A673 (cell line): ENCODE measurements at regions of chr7 and their contacts with region 1.

Region 1: DNA sequence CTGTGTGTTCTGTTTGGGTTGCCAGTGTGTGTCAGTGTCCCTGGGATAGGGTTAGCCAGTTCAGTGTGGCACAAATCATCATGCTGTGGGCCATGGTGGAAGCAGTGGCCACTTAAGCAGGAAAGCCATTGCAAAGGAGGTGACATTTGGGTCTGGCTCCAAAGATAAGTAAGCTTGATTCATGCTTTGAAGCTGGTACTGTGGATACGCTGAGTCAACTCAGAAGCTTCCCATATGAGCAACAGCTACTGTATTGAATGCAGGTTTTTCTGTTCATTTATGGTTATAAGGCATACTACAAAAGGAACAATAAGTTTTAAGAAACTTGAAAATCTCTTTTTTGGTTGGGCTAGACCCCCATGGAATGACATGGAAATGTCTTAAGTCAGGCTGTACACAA is 143.1 kb downstream of the BMPER start:
- DNase-seq: no peak
- H3K4me3 ChIP-seq: no peak overlapping the region
- H3K27ac ChIP-seq: peak overlapping the region; percentile 94
- H3K4me1 ChIP-seq: peaks cover 60% of the 10 kb centered on the region
- H3K27me3 ChIP-seq: no peaks in the 10 kb centered on the region
- CTCF ChIP-seq: no peak

Region 2: GRCh38 chr7:33757562-33758165 is 290.8 kb before region 1 on chr7:
- CTCF ChIA-PET with region 1: no interaction called
- POLR2A ChIA-PET with region 1: no interaction called
- intact Hi-C with region 1: loop called (anchors 5 kb)
- DNase-seq: peak; percentile 68
- H3K4me3 ChIP-seq: no peak overlapping the region
- H3K27ac ChIP-seq: no peak overlapping the region
- H3K4me1 ChIP-seq: peaks cover 32% of the 10 kb centered on the region
- H3K27me3 ChIP-seq: no peaks in the 10 kb centered on the region
- CTCF ChIP-seq: peak; percentile 69

Region 3: DNA sequence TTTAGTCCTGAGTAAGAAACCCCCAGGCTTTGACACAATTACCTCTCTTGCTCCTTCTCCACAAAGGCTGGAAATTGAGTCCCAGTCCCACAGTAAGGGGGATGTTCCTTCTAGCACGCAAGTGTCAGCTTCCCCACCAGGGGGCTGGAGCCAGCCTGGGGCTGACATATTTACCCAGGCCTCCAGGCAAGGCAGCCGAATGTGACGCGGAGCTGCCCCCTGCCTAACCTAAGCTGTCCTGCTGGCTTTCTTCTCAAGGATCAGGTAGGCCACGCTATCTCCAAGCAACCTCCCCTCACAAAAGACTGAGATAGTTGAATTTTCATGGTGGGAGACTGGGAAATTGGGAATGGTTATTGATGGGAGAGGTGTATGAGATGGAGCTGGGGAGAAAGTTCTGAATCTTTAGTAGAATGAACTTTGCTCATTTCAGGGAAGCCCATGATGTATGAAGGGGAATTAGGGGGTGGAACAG is 162.3 kb before region 1 on chr7:
- CTCF ChIA-PET with region 1: no interaction called
- POLR2A ChIA-PET with region 1: no interaction called
- intact Hi-C with region 1: no loop called
- DNase-seq: peak; percentile 66
- H3K4me3 ChIP-seq: no peak overlapping the region
- H3K27ac ChIP-seq: no peak overlapping the region
- H3K4me1 ChIP-seq: no peaks in the 10 kb centered on the region
- H3K27me3 ChIP-seq: no peaks in the 10 kb centered on the region
- CTCF ChIP-seq: peak; percentile 65

Region 4: DNA sequence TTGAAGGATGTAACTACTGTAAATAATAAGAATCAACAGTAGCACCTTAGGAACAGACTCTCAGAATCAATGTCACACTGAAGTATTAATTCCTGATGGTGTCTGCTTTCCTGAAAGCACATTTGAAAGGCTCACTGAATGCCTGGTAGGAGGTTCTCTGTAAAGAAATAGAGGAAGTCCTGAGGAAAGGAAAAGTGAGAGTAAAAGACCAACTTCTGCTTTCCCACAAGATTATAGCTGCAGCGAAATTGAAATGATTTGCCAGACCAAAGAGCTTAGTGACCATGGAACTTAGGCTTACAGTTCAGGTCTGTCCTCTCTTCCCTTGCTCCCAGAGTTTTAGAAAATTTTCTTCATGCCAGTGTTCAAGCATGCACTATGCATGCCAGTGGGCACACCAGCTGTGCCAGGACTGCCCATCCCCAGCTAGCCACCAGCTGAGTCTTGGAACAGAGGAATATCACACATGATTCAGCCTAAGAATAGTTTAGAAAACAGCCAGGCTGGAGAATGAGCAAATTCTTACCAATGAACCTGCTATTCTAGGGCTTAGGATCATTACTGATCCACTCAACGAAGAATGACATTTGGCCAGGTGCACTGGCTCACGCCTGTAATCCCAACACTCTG is 1523.3 kb after region 1 on chr7:
- CTCF ChIA-PET with region 1: interaction called, 10 read pairs
- POLR2A ChIA-PET with region 1: no interaction called
- intact Hi-C with region 1: no loop called
- DNase-seq: no peak
- H3K4me3 ChIP-seq: no peak overlapping the region
- H3K27ac ChIP-seq: no peak overlapping the region
- H3K4me1 ChIP-seq: peaks cover 21% of the 10 kb centered on the region
- H3K27me3 ChIP-seq: no peaks in the 10 kb centered on the region
- CTCF ChIP-seq: no peak